OCI-LY7 (cell line): ENCODE measurements at regions of chr9 and their contacts with region 1.

Region 1: DNA sequence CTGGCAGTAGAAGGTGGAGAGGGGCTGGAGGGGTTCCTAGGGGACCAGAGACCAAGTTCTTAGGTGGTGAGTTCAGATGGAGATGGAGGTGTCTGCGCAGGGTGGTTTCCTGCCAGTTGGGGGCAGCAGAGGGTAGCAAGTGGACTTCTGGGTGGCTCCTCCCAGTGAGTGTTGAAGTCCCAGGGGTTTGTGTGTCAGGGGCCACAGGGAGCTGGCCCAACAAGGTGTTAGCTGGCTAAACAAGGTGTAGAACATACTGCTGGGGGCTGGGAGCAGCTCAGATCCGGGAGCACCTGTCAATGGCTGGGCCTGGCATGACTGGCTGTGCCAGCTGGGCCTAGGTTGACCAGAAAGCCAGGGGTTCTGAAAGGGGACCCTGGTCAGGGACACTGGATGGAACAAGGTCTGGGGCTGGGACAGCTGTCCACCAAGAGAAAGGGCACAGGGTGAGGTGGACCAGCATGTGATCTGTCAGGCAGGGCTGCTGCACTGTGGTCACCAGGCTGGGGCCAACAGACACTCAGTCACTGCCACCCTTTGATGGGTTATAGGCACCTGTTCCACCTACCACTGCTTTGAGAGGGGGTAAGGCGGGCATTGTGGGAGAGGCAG is 35.6 kb downstream of the DAB2IP start:
- DNase-seq: peak; percentile 83
- H3K4me3 ChIP-seq: no peak overlapping the region
- H3K27ac ChIP-seq: no peak overlapping the region
- H3K4me1 ChIP-seq: peaks cover 13% of the 10 kb centered on the region
- CTCF ChIP-seq: peak; percentile 97

Region 2: DNA sequence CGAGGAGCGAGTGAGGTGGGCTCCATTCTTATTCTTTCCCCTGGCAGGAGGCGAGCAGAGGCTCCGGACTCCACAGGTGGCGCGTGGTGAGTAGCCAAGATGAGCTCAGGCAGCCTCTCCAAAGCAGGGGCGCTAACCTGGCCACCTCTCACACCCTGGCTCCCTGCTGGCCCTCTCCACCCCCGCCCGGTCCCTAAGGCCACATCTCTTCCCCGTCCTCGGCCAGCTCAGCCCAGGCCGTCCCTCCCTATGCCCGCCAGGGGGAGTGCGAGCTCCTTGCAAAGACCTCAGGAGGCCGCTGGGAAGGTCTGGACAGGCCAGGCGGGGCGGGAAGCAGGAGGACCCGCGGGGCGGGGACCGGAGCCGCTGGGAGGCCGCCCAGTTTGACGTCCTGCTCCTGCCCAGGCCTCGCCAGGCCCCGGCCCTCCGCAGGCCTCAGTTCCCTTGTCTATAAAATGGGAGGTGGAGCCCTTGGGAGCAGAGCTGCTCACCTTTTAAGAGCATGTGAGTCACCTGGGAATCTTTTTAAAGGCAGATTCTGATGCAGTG is 141.1 kb before region 1 on chr9:
- CTCF ChIA-PET with region 1: interaction called, 5 read pairs
- POLR2A ChIA-PET with region 1: no interaction called
- intact Hi-C with region 1: loop called (anchors 2 kb)
- DNase-seq: peak; percentile 78
- H3K4me3 ChIP-seq: no peak overlapping the region
- H3K27ac ChIP-seq: no peak overlapping the region
- H3K4me1 ChIP-seq: peaks cover 4% of the 10 kb centered on the region
- CTCF ChIP-seq: peak; percentile 86

Region 3: DNA sequence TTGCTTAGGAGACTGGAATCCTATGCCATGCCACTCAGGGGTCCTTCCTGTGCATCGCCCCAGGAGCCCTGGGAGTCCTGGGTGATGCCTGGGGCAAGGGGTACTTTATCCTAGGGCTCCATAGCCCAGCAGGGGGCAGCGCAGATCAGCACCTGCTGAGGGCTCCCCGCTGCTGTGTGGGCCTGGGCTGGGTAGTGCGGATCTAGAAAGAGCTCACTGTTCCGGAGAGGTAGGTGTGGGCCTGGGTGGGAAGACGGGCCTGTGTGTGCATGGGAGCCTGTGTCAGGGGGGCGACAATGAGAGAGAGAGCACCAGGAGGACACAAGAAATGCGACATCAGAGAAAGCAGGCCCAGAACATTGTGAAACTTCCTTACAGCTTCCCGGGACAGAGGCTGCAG is 47.0 kb before region 1 on chr9:
- CTCF ChIA-PET with region 1: interaction called, 14 read pairs
- POLR2A ChIA-PET with region 1: no interaction called
- intact Hi-C with region 1: loop called (anchors 5 kb)
- DNase-seq: peak; percentile 61
- H3K4me3 ChIP-seq: no peak overlapping the region
- H3K27ac ChIP-seq: no peak overlapping the region
- H3K4me1 ChIP-seq: no peaks in the 10 kb centered on the region
- CTCF ChIP-seq: peak; percentile 78

Region 4: DNA sequence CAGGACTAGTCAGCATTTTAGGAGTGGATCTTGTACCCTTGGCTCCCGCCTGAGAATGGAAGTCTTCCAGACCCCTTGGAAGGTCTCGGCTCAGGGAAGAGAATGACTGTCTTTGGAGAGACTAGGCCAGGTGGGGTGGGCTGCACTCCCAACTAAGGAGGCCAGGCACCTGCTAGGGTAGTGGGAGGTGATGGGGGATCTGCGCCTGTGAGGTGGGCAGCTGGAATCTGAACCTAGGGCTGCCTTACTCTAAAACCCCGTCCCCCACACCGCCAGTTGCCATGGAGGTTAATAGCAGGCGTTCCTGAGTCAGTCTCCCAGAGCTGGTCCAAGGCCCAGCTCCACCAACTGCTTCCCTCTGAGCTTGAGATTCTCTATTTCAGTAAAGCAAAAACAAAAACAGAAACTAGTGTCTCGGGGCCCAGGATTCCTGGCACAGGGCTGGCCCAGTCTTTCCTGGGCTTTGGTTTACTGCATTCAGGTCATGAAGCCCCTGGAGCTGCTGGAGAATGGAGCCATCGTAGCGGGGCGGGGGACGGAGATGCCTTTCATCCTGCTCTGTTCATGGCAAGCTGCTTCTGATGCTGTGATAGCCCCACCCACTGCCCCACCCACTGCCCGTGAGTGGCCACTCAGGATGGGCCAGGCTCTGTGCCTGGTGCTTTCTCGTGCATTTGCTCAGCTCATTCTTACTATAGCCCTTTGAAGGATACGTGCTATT is 21.9 kb after region 1 on chr9:
- CTCF ChIA-PET with region 1: no interaction called
- POLR2A ChIA-PET with region 1: no interaction called
- intact Hi-C with region 1: no loop called
- DNase-seq: no peak
- H3K4me3 ChIP-seq: peak overlapping the region; percentile 21
- H3K27ac ChIP-seq: peak overlapping the region; percentile 80
- H3K4me1 ChIP-seq: peaks cover 63% of the 10 kb centered on the region
- CTCF ChIP-seq: no peak

Region 5: DNA sequence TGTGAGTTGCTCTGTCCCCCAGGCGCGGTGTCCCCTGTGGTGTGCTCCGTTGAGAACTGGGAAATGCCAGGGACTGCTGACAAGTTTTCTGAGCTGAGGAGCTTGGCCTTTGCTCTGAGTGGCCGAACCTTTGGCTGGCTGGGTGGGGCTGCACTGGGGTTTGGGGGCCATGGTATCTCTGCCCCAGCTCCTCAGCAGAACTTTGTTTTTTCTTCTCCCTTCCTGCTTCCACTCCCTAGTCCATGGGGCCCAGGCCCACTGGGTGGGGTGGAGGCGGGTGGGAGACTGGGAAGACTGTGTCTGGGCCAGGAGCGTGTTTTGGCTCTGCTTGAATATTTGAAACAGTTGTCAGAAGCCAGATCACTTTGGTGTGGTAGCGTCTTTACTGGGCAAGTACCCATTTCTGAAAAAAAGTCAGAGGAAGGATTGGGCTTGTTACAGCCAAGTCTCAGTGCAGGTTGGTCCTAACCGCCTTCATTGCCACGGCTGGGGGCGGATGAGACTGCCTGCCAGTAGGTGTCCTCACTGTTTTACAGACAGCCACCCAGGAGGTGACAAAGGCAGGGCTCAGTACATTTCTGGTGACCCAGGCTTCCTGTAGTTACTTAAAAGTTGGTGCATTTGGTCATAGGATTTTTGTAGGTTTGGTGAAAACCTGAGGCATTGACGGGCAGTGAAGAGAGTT is 57.1 kb after region 1 on chr9:
- CTCF ChIA-PET with region 1: interaction called, 3 read pairs
- POLR2A ChIA-PET with region 1: no interaction called
- intact Hi-C with region 1: loop called (anchors 2 kb)
- DNase-seq: peak; percentile 89
- H3K4me3 ChIP-seq: no peak overlapping the region
- H3K27ac ChIP-seq: no peak overlapping the region
- H3K4me1 ChIP-seq: peaks cover 54% of the 10 kb centered on the region
- CTCF ChIP-seq: peak; percentile 97

Region 6: DNA sequence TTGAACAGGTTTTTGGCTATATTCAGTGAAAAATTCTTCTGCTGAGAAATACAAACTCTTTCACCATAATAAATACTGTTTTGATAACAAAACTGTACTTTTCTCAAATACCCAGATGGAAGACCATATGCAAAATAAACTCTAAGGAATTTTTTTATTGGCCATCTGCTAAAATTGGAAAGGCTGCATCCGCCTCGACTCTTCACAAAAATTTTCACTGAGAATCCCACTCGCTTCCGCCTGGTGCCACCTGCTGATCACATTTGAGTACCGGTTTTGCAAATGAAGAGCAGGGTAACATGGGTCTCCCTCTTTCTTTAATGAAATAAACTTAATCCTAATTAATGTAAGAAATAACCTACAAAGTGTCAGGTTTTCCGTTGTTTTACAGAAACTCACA is 329.7 kb after region 1 on chr9:
- CTCF ChIA-PET with region 1: no interaction called
- POLR2A ChIA-PET with region 1: interaction called, 3 read pairs
- intact Hi-C with region 1: loop called (anchors 1 kb)
- DNase-seq: peak; percentile 60
- H3K4me3 ChIP-seq: no peak overlapping the region
- H3K27ac ChIP-seq: no peak overlapping the region
- H3K4me1 ChIP-seq: peaks cover 9% of the 10 kb centered on the region
- CTCF ChIP-seq: peak; percentile 90